Naive thymus-derived CD4-positive, alpha-beta T cell (primary cell): ENCODE measurements at regions of chr17 and their contacts with region 1.

Region 1: DNA sequence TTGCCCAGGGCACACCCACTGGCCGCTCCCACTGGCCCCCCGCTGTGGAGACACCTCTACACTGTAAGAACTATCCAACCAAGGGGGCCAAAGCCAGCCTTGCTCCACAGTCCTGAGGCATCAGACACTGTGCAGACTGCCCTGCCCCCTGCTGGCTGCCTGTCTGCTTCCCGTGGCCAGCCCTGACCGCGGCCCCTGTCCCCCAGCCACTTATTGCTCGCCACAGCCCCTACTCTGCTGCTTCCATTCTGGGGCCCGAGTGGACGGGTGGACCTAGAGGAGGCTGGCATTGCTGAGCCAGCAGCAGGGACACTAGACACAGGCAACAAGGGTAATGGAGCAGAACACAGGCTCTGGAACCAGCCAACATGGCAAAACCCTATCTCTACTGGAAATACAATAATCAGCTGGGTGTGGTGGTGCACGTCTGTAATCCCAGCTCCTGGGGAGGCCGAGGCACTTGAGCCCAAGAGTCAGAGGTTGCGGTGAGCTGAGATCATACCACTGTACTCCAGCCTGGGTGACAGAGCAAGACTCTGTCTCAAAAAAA is 19.7 kb upstream of the LRRC37A3 start:
- DNase-seq: peak in 6 of 9 donors; percentile 7 to 60 (median 18)
- ATAC-seq: peak; percentile 84
- H3K4me3 ChIP-seq: no peak overlapping the region
- H3K4me3 Mint-ChIP-seq: no peak overlapping the region
- H3K27ac ChIP-seq: no peak overlapping the region
- H3K27ac Mint-ChIP-seq: peak overlapping the region in 1 of 9 donors; percentile 40
- H3K4me1 ChIP-seq: no peaks in the 10 kb centered on the region
- H3K4me1 Mint-ChIP-seq: peaks cover 0 to 18% (median 4%) of the 10 kb centered on the region in 7 donors
- H3K27me3 ChIP-seq: no peaks in the 10 kb centered on the region
- H3K27me3 Mint-ChIP-seq: peaks cover 0 to 9% (median 0%) of the 10 kb centered on the region in 5 donors

Region 2: DNA sequence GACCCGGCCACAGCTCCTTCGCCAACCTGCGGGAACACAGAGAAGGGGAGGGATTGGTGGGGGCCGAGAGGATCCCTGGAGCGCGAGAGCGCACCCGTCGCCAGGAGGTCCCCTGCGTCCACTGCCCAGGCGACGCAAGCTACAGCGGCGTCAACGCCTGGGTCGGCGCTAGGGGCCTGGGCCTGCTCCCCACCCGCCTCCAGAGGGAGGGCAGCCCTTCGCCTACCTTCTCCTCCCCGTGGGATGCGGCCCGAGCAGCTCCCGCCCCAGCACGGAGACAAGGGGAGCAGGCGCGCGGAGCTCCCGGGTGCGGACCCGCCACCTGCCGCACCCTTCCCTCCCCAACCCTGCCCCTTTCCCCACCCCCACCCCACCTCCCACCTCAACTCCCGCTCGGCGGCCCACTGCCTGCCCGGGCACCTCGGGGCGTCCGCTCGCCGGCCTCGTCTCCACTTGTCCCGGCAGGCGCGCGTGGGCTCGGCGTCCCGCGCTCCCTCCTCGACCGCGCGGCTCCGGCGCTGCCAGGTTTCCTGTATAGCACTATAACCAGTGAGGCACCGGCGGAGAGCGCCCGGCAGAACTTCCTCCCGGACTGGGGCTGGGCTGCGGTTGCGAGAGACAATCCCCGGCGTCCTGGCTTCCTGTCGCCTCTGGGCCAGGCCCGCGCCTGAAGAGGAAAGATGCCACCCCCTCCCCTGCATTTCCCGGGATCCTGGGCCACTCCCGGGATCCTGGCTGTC is 157.8 kb before region 1 on chr17:
- CTCF ChIA-PET with region 1: no interaction called
- POLR2A ChIA-PET with region 1: no interaction called
- intact Hi-C with region 1: loop called in 1 of 2 experiments (anchors 5 kb)
- DNase-seq: peak in 8 of 9 donors; percentile 33 to 59 (median 44)
- ATAC-seq: peak; percentile 51
- H3K4me3 ChIP-seq: peak overlapping the region; percentile 61
- H3K4me3 Mint-ChIP-seq: peak overlapping the region; percentile 66 to 82 (median 78)
- H3K27ac ChIP-seq: peak overlapping the region; percentile 25
- H3K27ac Mint-ChIP-seq: peak overlapping the region in 2 of 9 donors; percentile 32 to 79
- H3K4me1 ChIP-seq: peaks cover 15 to 28% of the 10 kb centered on the region in 2 donors
- H3K4me1 Mint-ChIP-seq: peaks cover 11 to 31% (median 23%) of the 10 kb centered on the region in 7 donors
- H3K27me3 ChIP-seq: no peaks in the 10 kb centered on the region
- H3K27me3 Mint-ChIP-seq: peaks cover 0 to 12% (median 0%) of the 10 kb centered on the region in 5 donors